Panc1 (cell line): ENCODE measurements at regions of chr19 and their contacts with region 1.

Region 1: GRCh38 chr19:43446746-43447489 is 18.5 kb downstream of the LYPD3 start:
- DNase-seq: no peak
- ATAC-seq: peak; percentile 92
- H3K4me3 ChIP-seq: no peak overlapping the region
- H3K27ac ChIP-seq: no peak overlapping the region
- H3K4me1 ChIP-seq: no peaks in the 10 kb centered on the region
- H3K27me3 ChIP-seq: no peaks in the 10 kb centered on the region
- CTCF ChIP-seq: peak; percentile 86

Region 2: DNA sequence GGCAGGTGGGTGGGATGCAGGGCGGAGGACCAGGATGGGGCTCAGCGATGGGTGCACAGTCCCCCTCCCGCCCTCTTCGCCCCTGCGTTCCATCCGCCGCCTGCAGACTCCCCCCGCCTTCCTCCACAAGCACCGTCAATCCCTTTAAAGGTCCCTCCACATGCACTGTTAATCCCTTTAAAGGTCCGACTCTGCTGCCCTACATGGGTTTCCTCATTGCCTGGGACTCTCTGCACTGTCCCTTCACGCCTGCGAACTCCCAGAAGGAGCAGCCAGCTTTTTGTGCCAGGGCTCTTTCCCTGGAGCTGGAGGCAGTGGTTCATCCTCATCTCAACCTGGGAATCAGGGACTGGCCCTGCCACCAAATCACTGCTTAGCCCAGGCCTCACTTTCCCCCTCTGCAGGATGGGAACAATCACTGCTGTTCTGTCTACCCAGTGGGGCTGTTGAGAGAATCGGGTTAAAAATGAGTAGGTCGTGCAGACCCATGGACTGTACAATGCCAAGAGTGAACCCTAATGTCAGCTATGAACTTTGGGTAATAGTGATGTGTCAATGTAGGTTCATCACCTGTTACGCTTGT is 1350.6 kb before region 1 on chr19:
- CTCF ChIA-PET with region 1: no interaction called
- POLR2A ChIA-PET with region 1: interaction called, 19 read pairs
- in situ Hi-C with region 1: no loop called
- intact Hi-C with region 1: no loop called
- DNase-seq: no peak
- ATAC-seq: no peak
- H3K4me3 ChIP-seq: no peak overlapping the region
- H3K27ac ChIP-seq: no peak overlapping the region
- H3K4me1 ChIP-seq: no peaks in the 10 kb centered on the region
- H3K27me3 ChIP-seq: no peaks in the 10 kb centered on the region
- CTCF ChIP-seq: no peak

Region 3: DNA sequence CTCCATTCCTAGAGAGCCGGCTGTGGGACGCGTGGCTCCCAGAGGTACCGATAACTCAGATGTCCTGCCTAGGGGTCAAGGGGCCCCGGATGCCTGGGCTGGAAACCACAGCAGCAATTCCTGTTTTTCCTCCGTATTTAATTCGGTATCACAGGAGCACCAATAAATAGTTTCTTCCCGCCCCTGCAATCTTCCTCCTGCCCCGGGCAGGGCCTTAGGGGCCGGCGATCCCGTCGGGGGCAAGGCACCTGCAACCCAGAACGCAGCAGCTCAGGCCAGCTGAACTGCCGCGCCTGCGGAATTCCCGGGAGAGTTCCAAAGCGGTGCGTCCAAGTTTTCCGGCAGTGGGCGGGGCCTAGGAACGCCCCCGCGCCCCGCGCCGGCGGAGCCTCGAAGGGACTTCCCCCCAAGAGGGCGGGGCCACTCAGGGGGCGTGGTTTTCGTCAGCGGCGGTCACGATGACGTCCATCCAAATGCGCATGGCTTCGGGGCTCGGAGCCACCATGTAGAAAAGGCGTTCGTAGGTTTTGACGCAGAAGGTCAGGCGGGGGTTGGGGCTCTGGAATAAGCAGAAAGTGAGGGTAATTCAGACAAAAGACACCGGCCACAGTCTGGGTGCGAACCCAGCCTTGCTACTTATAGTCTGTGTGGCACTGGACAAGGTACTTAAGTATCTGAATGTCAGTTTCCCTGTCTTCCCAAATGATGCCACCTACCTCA is 28.2 kb after region 1 on chr19:
- CTCF ChIA-PET with region 1: no interaction called
- POLR2A ChIA-PET with region 1: no interaction called
- in situ Hi-C with region 1: no loop called
- intact Hi-C with region 1: no loop called
- DNase-seq: peak; percentile 54
- ATAC-seq: peak; percentile 92
- H3K4me3 ChIP-seq: peak overlapping the region; percentile 43 to 58
- H3K27ac ChIP-seq: peak overlapping the region; percentile 82
- H3K4me1 ChIP-seq: 0 out of 2 replicates have a peak, but pooled peaks cover 2% of the 10 kb centered on the region
- H3K27me3 ChIP-seq: no peaks in the 10 kb centered on the region
- CTCF ChIP-seq: no peak

Region 4: GRCh38 chr19:43519436-43520088 is 72.6 kb after region 1 on chr19:
- CTCF ChIA-PET with region 1: interaction called, 24 read pairs
- POLR2A ChIA-PET with region 1: interaction called, 3 read pairs
- in situ Hi-C with region 1: no loop called
- intact Hi-C with region 1: loop called (anchors 1 kb)
- DNase-seq: peak; percentile 43
- ATAC-seq: peak; percentile 87
- H3K4me3 ChIP-seq: no peak overlapping the region
- H3K27ac ChIP-seq: no peak overlapping the region
- H3K4me1 ChIP-seq: no peaks in the 10 kb centered on the region
- H3K27me3 ChIP-seq: no peaks in the 10 kb centered on the region
- CTCF ChIP-seq: peak; percentile 82

Region 5: GRCh38 chr19:43675269-43675879 is 228.5 kb after region 1 on chr19:
- CTCF ChIA-PET with region 1: no interaction called
- POLR2A ChIA-PET with region 1: no interaction called
- in situ Hi-C with region 1: no loop called
- intact Hi-C with region 1: no loop called
- DNase-seq: peak; percentile 18
- ATAC-seq: peak; percentile 80
- H3K4me3 ChIP-seq: peak overlapping the region in 1 of 2 experiments; percentile 14; a peak in 2 of 4 replicates
- H3K27ac ChIP-seq: no peak overlapping the region
- H3K4me1 ChIP-seq: peaks cover 9% of the 10 kb centered on the region
- H3K27me3 ChIP-seq: no peaks in the 10 kb centered on the region
- CTCF ChIP-seq: no peak